A549 (cell line): ENCODE measurements at regions of chr15 and their contacts with region 1.

Region 1: GRCh38 chr15:38440353-38441129 is 13.4 kb upstream of the FAM98B start:
- DNase-seq: peak; percentile 6 to 57
- ATAC-seq: peak; percentile 81 to 82
- H3K4me3 ChIP-seq: no peak overlapping the region
- H3K27ac ChIP-seq: no peak overlapping the region
- H3K4me1 ChIP-seq: no peaks in the 10 kb centered on the region
- CTCF ChIP-seq: peak; percentile 68
- EP300 ChIP-seq: no peak
- POLR2A ChIP-seq: no peak
- RAD21 ChIP-seq: peak; percentile 63 to 71

Region 2: GRCh38 chr15:38226608-38227266 is 213.8 kb before region 1 on chr15:
- CTCF ChIA-PET with region 1: no interaction called
- POLR2A ChIA-PET with region 1: no interaction called
- DNase-seq: peak; percentile 36 to 76
- ATAC-seq: peak; percentile 73 to 89
- H3K4me3 ChIP-seq: no peak overlapping the region
- H3K27ac ChIP-seq: no peak overlapping the region; a peak in 1 of 6 replicates
- H3K4me1 ChIP-seq: peaks cover 14% of the 10 kb centered on the region
- CTCF ChIP-seq: no peak
- EP300 ChIP-seq: no peak
- POLR2A ChIP-seq: no peak
- RAD21 ChIP-seq: no peak

Region 3: DNA sequence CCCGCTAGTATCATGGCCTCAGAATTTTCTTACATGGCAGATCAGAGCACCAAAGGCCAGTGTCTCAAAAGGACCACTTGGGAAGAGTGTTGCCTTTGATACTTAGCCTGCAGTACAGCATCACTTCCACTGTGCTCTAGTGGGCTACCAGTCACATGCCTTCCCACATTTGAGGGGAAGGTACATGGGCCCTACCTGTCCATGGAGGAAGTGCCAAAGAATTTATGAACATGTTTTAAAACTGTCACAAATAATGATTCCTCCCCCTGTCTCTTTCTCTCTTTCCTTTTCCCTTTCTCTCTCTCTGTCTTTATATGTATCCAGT is 10.1 kb before region 1 on chr15:
- CTCF ChIA-PET with region 1: interaction called, 16 read pairs
- POLR2A ChIA-PET with region 1: no interaction called
- DNase-seq: no peak
- ATAC-seq: no peak
- H3K4me3 ChIP-seq: no peak overlapping the region
- H3K27ac ChIP-seq: no peak overlapping the region
- H3K4me1 ChIP-seq: no peaks in the 10 kb centered on the region
- CTCF ChIP-seq: no peak
- EP300 ChIP-seq: no peak
- POLR2A ChIP-seq: no peak
- RAD21 ChIP-seq: no peak

Region 4: DNA sequence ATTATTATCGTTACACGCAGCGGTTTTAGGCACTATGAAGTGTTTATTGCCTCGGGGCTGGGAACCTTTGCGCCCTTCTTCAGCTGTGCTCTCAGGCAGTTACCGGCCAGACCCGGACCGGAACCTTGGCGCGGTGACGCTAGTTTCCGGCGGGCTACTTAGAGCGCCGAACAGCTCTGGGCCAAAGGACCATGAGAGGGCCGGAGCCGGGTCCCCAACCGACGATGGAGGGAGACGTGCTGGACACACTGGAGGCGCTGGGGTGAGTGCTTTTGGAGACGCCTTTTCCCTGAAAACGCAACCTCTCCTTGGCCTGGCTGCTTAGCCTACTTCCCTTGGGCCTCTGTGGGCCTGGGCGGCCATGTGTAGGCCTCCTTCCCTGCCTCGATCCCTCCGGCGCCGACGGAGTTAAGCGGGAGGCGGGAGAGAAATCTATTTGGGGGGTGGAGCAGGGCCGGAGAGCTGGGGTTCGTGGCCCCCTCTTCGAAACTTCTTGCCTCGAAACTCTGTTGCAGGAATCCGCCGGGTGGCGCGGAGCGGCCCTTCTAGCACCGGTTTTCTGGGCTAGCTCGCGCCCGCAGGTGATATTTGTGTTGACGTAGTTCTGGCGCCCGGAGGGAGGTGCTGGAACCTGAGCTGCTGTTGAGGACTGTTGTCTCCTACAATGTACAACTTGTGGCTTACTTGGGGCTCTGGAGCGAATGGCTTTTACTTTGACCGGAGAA is 13.6 kb after region 1 on chr15 and contains the start of gene FAM98B:
- CTCF ChIA-PET with region 1: interaction called, 26 read pairs
- POLR2A ChIA-PET with region 1: interaction called, 3 read pairs
- DNase-seq: peak; percentile 65 to 88
- ATAC-seq: peak; percentile 98 to 99
- H3K4me3 ChIP-seq: peak within 1 kb of the TSS; percentile 85
- H3K27ac ChIP-seq: peak within 1 kb of the TSS; percentile 92 to 98
- H3K4me1 ChIP-seq: no peaks in the 10 kb centered on the region
- CTCF ChIP-seq: no peak
- EP300 ChIP-seq: no peak
- POLR2A ChIP-seq: peak; percentile 42
- RAD21 ChIP-seq: no peak
- polyA plus RNA-seq, gene FAM98B: 15.4 and 18.8 TPM in 2 replicates

Region 5: GRCh38 chr15:38536201-38536676 is 95.7 kb after region 1 on chr15:
- CTCF ChIA-PET with region 1: no interaction called
- POLR2A ChIA-PET with region 1: no interaction called
- DNase-seq: no peak
- ATAC-seq: no peak
- H3K4me3 ChIP-seq: no peak overlapping the region
- H3K27ac ChIP-seq: no peak overlapping the region
- H3K4me1 ChIP-seq: peaks cover 4% of the 10 kb centered on the region; the same call in 1 of the 3 replicates
- CTCF ChIP-seq: no peak
- EP300 ChIP-seq: no peak
- POLR2A ChIP-seq: no peak
- RAD21 ChIP-seq: no peak

Region 6: DNA sequence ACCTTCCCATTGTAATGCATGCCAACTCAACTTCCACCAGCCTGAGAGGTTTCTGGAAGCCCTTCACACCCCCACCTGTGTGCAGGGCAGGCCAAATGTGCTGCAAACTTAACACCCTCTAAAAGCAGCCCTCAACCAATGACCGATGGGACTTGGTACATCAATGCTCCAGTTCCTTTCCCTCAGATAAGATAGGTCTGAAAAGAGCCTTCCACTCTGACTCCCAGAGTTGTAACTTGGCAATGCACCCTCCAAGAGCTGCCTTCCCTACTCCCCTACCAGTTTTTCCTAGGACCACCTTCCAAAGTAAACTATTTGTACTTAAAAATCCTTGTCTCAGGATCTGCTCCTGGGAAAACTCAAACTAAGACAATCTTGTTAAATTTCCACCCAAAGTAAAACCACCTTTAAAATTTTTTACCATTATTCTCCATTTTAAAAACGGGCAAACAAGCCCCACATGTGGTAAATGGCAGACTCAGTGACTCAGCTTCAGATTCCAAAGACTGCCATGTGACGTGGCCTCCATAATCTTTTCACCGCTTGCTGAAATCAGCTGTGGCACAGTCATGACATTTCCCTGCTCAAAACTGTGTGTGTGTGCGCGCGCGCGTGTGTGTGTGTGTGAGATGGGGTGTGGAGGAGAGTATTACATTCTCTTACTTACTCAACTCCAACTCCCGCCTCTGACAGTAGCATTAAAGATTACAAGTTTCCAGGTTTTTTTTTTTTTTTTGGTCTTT is 106.9 kb after region 1 on chr15:
- CTCF ChIA-PET with region 1: no interaction called
- POLR2A ChIA-PET with region 1: no interaction called
- DNase-seq: no peak
- ATAC-seq: no peak
- H3K4me3 ChIP-seq: no peak overlapping the region
- H3K27ac ChIP-seq: no peak overlapping the region
- H3K4me1 ChIP-seq: no peaks in the 10 kb centered on the region
- CTCF ChIP-seq: no peak
- EP300 ChIP-seq: no peak
- POLR2A ChIP-seq: no peak
- RAD21 ChIP-seq: no peak

Region 7: DNA sequence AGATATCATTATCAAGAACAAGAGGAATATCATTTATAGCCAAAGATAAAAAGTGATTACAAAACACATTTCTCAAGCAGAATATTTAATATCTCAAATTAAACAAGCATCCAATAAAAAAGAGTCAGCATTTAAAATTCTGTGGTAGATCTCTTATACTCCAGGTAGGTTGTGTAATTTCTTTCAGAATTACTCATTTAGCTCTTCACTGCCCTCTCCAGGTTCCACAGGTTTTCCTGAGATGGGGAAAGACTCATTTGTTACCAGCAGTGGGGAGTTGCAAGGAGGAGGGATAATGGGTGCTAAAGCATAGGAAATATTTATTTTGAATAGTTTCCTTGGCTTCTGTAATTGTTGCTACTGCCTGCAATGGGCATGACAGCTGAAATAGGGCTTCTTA is 207.1 kb after region 1 on chr15:
- CTCF ChIA-PET with region 1: interaction called, 20 read pairs
- POLR2A ChIA-PET with region 1: no interaction called
- DNase-seq: peak; percentile 20
- ATAC-seq: peak; percentile 68 to 76; a peak in 3 of 6 replicates
- H3K4me3 ChIP-seq: no peak overlapping the region
- H3K27ac ChIP-seq: no peak overlapping the region
- H3K4me1 ChIP-seq: no peaks in the 10 kb centered on the region
- CTCF ChIP-seq: peak; percentile 40
- EP300 ChIP-seq: no peak
- POLR2A ChIP-seq: no peak
- RAD21 ChIP-seq: peak; percentile 36 to 37; a peak in 3 of 5 replicates

Region 8: DNA sequence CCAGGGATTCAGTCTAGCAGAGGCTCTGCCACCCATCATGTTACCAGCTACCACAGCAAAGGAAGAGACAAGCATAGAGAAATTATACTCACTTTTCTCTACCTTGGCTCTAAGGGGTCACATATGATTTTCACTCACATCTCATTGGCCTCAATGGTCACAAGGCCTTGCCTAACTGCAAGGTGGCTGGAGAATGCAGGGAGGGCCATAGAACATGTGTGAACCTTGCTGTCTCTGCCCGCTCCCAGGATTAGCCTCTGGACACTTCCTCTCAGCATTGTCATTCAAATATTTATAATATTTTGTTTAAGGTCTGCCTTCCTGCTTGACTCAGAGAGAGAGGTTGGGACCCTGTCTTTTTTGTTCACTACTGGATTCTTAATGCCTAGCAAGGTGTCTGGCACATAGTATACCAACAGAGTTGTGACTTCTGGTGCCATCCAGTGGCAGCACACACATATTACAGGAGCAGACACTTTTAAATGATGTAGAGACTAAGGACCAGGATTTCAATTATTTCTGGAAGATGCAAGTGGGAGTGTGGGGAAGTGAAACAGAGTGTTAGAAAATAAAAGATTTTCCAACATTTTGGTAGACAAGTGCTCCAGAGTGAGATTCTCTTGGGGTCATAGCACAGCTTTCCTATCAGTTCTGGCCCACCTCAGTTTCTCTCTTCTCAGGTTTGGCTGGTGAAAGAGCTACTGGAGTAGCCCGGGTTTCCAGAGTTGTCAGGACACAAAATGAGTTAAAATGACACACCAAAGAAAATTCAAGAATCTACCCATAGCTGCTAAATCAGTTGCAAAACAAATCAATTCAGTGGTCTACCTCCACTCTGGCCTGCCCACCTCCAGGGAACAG is 243.1 kb after region 1 on chr15:
- CTCF ChIA-PET with region 1: interaction called, 44 read pairs
- POLR2A ChIA-PET with region 1: no interaction called
- DNase-seq: peak; percentile 35 to 38
- ATAC-seq: peak; percentile 86 to 90
- H3K4me3 ChIP-seq: no peak overlapping the region
- H3K27ac ChIP-seq: no peak overlapping the region
- H3K4me1 ChIP-seq: no peaks in the 10 kb centered on the region
- CTCF ChIP-seq: peak; percentile 60
- EP300 ChIP-seq: no peak
- POLR2A ChIP-seq: no peak
- RAD21 ChIP-seq: peak; percentile 70 to 74

Region 9: DNA sequence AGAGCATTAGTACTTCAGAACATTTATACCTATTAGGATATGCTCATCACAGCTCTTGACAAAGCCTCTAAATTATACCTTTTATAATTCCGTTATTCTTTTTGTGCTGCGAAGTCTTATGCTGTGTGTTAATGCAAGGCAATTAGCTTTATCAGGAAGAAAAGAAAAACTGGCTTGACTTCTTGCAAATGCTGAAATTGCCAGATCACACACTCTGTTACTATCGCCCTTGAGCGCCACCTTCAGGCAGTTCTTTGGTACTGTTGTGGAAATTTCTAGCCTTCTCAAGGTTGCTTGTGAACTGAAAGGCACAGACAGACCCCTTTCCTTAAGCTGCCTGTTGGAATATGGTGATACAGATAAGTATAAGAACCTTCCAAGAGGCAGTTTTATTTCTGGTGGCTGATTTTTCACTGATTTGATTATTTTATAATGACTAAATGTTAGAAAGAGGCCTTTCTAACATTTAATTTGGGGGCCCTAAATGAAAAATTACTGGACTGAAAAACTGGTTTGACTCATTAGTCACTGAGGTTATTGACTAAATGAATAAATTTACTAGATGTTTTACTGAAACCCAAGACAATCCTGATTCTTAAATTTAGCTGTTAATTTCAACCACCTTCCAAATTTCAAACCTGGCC is 250.3 kb after region 1 on chr15:
- CTCF ChIA-PET with region 1: interaction called, 44 read pairs
- POLR2A ChIA-PET with region 1: no interaction called
- DNase-seq: peak in 1 of 2 experiments; percentile 68
- ATAC-seq: peak in 1 of 2 experiments; percentile 76; a peak in 3 of 6 replicates
- H3K4me3 ChIP-seq: no peak overlapping the region
- H3K27ac ChIP-seq: no peak overlapping the region
- H3K4me1 ChIP-seq: no peaks in the 10 kb centered on the region
- CTCF ChIP-seq: peak; percentile 56
- EP300 ChIP-seq: no peak
- POLR2A ChIP-seq: no peak
- RAD21 ChIP-seq: peak; percentile 35 to 57; a peak in 3 of 5 replicates

Region 10: DNA sequence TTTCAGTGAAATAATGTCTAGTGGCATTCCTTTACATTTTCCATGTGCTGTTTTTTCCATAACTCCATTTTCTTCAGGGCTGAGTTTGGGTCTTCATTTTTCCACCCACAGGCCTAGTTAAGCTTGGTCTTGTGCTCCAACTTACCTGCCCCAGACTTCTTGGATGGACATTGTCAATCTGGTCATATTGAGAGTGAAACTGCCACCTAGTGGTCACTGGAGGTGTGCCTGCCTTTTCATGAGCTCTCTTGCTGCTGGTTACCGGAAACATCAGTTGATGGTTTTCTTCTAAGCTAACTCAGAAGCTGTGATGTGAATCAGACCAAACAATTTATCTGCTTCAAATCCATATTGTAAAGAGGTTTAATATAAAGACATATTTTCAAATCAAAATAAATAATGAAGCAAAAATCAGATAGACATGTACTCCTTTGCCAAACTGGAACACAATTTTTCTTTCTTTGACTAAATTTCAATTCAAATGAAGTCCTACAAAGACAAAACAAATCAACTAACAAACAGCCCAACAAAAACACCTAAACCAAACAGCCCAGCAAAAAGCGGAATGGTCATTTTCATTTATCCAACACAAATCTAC is 259.2 kb after region 1 on chr15:
- CTCF ChIA-PET with region 1: interaction called, 27 read pairs
- POLR2A ChIA-PET with region 1: no interaction called
- DNase-seq: peak; percentile 50 to 61
- ATAC-seq: peak; percentile 68 to 80; a peak in 3 of 6 replicates
- H3K4me3 ChIP-seq: no peak overlapping the region
- H3K27ac ChIP-seq: no peak overlapping the region
- H3K4me1 ChIP-seq: peaks cover 9% of the 10 kb centered on the region; the same call in 2 of the 3 replicates
- CTCF ChIP-seq: peak; percentile 53
- EP300 ChIP-seq: no peak
- POLR2A ChIP-seq: no peak
- RAD21 ChIP-seq: peak; percentile 51 to 54; a peak in 4 of 5 replicates